Transverse colon (tissue), 4 donors: ENCODE measurements at regions of chr18 and their contacts with region 1.

Region 1: GRCh38 chr18:26662996-26663395 is 114.6 kb upstream of the KCTD1 start:
- DNase-seq: no peak
- H3K4me3 ChIP-seq: no peak overlapping the region
- H3K27ac ChIP-seq: no peak overlapping the region
- H3K4me1 ChIP-seq: peaks cover 0 to 7% (median 3%) of the 10 kb centered on the region in 4 donors
- H3K27me3 ChIP-seq: peaks cover 38% of the 10 kb centered on the region
- CTCF ChIP-seq: no peak
- EP300 ChIP-seq: no peak
- POLR2A ChIP-seq: no peak

Region 2: DNA sequence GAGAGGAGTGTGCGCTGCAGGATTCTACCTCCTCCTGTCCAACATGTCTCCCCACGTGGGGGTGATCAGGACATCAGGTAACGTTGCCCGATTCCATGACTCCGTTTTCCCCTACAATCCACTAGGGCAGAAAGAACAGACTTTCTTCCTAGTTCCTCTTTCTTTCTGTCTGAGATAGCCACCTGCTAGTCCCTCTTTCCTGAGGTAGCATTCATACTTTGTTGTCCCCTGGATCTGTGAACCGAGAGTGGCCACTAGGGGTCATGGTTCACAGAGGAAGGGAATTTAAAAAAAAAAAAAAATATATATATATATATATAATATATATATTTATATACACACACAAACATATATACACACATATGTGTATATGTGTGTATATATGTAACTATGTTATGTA is 1101.1 kb before region 1 on chr18:
- in situ Hi-C with region 1: no loop called
- intact Hi-C with region 1: loop called (anchors 10 kb)
- DNase-seq: peak; percentile 10
- H3K4me3 ChIP-seq: no peak overlapping the region
- H3K27ac ChIP-seq: no peak overlapping the region
- H3K4me1 ChIP-seq: no peaks in the 10 kb centered on the region
- H3K27me3 ChIP-seq: no peaks in the 10 kb centered on the region
- CTCF ChIP-seq: peak in 3 of 5 experiments; percentile 23 to 39 (median 27)
- EP300 ChIP-seq: no peak
- POLR2A ChIP-seq: no peak

Region 3: GRCh38 chr18:26865557-26865956 is 202.6 kb after region 1 on chr18 and contains the start of gene AQP4:
- in situ Hi-C with region 1: no loop called
- intact Hi-C with region 1: loop called (anchors 5 kb)
- DNase-seq: no peak
- H3K4me3 ChIP-seq: no peak within 1 kb of the TSS
- H3K27ac ChIP-seq: no peak within 1 kb of the TSS
- H3K4me1 ChIP-seq: peaks cover 0 to 27% (median 8%) of the 10 kb centered on the region in 4 donors
- H3K27me3 ChIP-seq: peaks cover 25% of the 10 kb centered on the region
- CTCF ChIP-seq: no peak
- EP300 ChIP-seq: no peak
- POLR2A ChIP-seq: no peak
- total RNA-seq, gene AQP4: 2.2 TPM in 1 of 4 donors, not detected in the others